A549 (cell line): ENCODE measurements at regions of chr2 and their contacts with region 1.

Region 1: GRCh38 chr2:27016801-27017325 is 15.9 kb upstream of the TMEM214 start:
- DNase-seq: peak; percentile 79 to 81
- ATAC-seq: peak; percentile 54 to 77; a peak in 4 of 6 replicates
- H3K4me3 ChIP-seq: no peak overlapping the region
- H3K27ac ChIP-seq: peak overlapping the region; percentile 77 to 86
- H3K4me1 ChIP-seq: peaks cover 40% of the 10 kb centered on the region
- CTCF ChIP-seq: peak; percentile 96
- EP300 ChIP-seq: no peak
- POLR2A ChIP-seq: no peak
- RAD21 ChIP-seq: peak; percentile 97 to 98

Region 2: DNA sequence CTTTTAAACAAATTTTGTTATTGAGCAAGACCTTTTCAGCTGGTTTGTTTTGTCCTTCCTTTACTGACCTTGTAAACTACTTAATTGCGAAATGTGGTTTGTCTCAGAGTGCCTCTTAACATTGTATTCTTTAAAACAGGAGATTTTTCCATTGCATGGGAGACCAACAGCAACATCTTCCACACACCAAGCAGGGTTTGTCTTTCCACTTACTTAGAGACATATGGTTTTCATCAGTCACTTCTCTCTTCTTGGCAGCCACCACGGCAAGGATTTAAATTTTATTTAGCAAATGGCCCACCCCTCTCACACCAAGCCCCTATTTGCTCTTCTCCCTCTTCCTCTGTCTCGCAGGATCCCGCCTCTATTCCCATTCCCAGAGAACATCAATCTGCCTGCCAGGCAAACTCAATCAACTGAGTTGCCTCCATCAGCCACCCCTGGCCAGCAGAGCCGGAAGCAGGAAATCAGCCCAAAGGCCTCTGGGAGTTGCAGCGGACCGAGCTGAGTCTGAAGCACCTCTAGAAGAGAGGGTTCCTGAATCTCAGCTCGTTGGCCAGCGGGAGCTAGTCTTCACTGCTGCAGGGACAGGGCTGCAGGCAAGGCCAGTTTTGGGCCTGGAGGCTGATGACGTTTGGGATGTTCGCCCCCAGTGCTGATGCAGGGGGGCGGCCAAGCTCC is 364.4 kb before region 1 on chr2:
- CTCF ChIA-PET with region 1: no interaction called
- POLR2A ChIA-PET with region 1: no interaction called
- DNase-seq: no peak
- ATAC-seq: no peak
- H3K4me3 ChIP-seq: no peak overlapping the region
- H3K27ac ChIP-seq: peak overlapping the region in 1 of 2 experiments; percentile 36; a peak in 2 of 6 replicates
- H3K4me1 ChIP-seq: no peaks in the 10 kb centered on the region
- CTCF ChIP-seq: no peak
- EP300 ChIP-seq: no peak
- POLR2A ChIP-seq: no peak
- RAD21 ChIP-seq: no peak

Region 3: DNA sequence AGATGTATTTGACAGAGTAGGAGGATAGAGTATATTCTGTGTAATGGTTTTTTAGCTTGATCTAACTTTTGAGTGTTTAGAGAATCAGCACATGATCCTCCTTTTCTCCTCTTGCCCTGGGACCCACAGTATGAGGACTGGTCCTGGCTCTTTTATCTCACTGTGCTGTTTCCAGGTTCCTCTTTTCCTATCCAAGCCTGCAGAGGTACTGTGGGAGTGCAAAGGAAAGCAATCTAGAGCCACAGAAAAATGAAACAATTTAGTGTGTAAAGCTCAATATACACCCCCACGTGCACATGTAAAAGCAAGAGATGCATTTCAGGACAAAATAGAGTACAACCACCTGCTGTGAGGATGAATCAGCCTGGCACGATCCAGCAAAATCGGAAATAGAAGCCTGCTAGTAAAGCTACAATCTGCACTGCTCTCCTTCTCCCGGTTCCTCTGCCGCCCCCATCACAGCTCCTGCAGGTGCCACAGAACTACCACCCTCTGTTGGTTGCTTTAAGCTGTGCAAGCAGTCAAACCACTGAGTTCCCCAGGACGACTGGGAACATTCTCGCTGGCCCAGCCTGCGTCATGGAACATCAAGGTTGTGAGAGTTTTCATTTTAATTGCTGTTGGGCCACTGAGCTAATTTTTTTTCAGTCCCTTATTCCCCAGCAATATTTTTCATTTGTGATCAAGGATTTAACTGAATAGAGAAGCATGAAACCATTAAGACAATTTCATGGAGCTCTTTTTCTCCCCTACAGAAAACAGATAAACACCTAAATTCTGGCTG is 94.3 kb before region 1 on chr2:
- CTCF ChIA-PET with region 1: interaction called, 10 read pairs
- POLR2A ChIA-PET with region 1: no interaction called
- DNase-seq: peak; percentile 68 to 93
- ATAC-seq: peak; percentile 93 to 99
- H3K4me3 ChIP-seq: no peak overlapping the region
- H3K27ac ChIP-seq: no peak overlapping the region
- H3K4me1 ChIP-seq: peaks cover 7% of the 10 kb centered on the region; the same call in 1 of the 3 replicates
- CTCF ChIP-seq: peak; percentile 65
- EP300 ChIP-seq: no peak
- POLR2A ChIP-seq: no peak
- RAD21 ChIP-seq: peak; percentile 62 to 69

Region 4: DNA sequence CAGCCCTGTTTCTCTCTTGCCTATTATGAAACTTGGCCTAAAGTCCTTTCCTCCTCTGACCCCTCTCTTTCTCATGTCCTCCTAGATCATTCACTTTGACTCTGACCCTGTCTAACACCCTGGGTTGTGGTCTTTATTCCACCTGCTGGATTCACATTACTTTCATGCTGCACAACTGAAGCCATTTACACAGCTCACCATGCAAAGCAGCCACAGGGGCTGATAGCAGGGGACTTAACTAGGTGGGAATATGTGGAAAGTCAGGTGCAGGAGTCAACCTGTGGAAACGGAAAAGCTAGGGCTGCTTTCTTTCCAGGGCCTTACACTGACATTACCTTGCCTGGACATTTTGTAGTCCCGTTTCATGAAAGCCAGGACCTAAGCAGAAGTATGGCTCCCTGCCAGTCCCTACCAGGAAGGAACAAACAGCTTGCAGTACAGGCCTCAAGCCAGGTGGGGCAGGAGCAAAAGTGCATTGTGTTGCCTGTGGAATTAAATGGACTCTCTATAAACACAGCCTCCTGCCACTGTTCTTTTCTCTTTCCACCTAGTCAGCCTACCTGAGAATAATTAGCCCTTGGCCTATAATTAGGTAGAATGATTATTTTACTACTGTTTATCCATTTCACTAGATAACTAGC is 34.6 kb before region 1 on chr2:
- CTCF ChIA-PET with region 1: interaction called, 74 read pairs
- POLR2A ChIA-PET with region 1: no interaction called
- DNase-seq: peak; percentile 74 to 79
- ATAC-seq: peak; percentile 95 to 99
- H3K4me3 ChIP-seq: no peak overlapping the region
- H3K27ac ChIP-seq: no peak overlapping the region
- H3K4me1 ChIP-seq: peaks cover 10% of the 10 kb centered on the region; the same call in 2 of the 3 replicates
- CTCF ChIP-seq: no peak
- EP300 ChIP-seq: no peak
- POLR2A ChIP-seq: no peak
- RAD21 ChIP-seq: no peak

Region 5: GRCh38 chr2:26993768-26994167 is 23.1 kb before region 1 on chr2:
- CTCF ChIA-PET with region 1: interaction called, 74 read pairs
- POLR2A ChIA-PET with region 1: no interaction called
- DNase-seq: no peak
- ATAC-seq: no peak
- H3K4me3 ChIP-seq: no peak overlapping the region
- H3K27ac ChIP-seq: no peak overlapping the region
- H3K4me1 ChIP-seq: peaks cover 3% of the 10 kb centered on the region; the same call in 1 of the 3 replicates
- CTCF ChIP-seq: no peak
- EP300 ChIP-seq: no peak
- POLR2A ChIP-seq: no peak
- RAD21 ChIP-seq: no peak

Region 6: GRCh38 chr2:27032495-27033252 is 15.8 kb after region 1 on chr2 and contains the start of gene TMEM214:
- CTCF ChIA-PET with region 1: interaction called, 75 read pairs
- POLR2A ChIA-PET with region 1: no interaction called
- DNase-seq: peak; percentile 91 to 95
- ATAC-seq: peak; percentile 97 to 99
- H3K4me3 ChIP-seq: peak within 1 kb of the TSS; percentile 80
- H3K27ac ChIP-seq: peak within 1 kb of the TSS; percentile 91 to 95
- H3K4me1 ChIP-seq: peaks cover 23% of the 10 kb centered on the region
- CTCF ChIP-seq: no peak
- EP300 ChIP-seq: no peak
- POLR2A ChIP-seq: peak; percentile 82
- RAD21 ChIP-seq: no peak
- polyA plus RNA-seq, gene TMEM214: 74.9 and 106 TPM in 2 replicates

Region 7: GRCh38 chr2:27050281-27050995 is 33.6 kb after region 1 on chr2:
- CTCF ChIA-PET with region 1: interaction called, 16 read pairs
- POLR2A ChIA-PET with region 1: interaction called, 3 read pairs
- DNase-seq: peak; percentile 95 to 97
- ATAC-seq: peak; percentile 77 to 86
- H3K4me3 ChIP-seq: peak overlapping the region; percentile 86
- H3K27ac ChIP-seq: peak overlapping the region; percentile 83 to 93
- H3K4me1 ChIP-seq: peaks cover 13% of the 10 kb centered on the region; the same call in 2 of the 3 replicates
- CTCF ChIP-seq: no peak
- EP300 ChIP-seq: no peak
- POLR2A ChIP-seq: peak; percentile 97
- RAD21 ChIP-seq: no peak